Activated T-helper 2 cell treated with anti-CD3 and anti-CD28 coated beads, Interferon-gamma antibody, Interleukin-2, Interleukin-4, amounts not matched to agents 10 μg/mL and 5 μg/mL and 100 μg/mL, durations not matched to agents 14 hours and 24 hours and 36 hours (primary cell): ENCODE measurements at regions of chr1 and their contacts with region 1.

Region 1: GRCh38 chr1:85307987-85308832 is 31.8 kb upstream of the BCL10 start:
- DNase-seq: peak; percentile 24
- H3K4me3 Mint-ChIP-seq: no peak overlapping the region
- H3K27ac Mint-ChIP-seq: no peak overlapping the region
- H3K4me1 Mint-ChIP-seq: peaks cover 3% of the 10 kb centered on the region
- H3K27me3 Mint-ChIP-seq: peaks cover 67% of the 10 kb centered on the region

Region 2: DNA sequence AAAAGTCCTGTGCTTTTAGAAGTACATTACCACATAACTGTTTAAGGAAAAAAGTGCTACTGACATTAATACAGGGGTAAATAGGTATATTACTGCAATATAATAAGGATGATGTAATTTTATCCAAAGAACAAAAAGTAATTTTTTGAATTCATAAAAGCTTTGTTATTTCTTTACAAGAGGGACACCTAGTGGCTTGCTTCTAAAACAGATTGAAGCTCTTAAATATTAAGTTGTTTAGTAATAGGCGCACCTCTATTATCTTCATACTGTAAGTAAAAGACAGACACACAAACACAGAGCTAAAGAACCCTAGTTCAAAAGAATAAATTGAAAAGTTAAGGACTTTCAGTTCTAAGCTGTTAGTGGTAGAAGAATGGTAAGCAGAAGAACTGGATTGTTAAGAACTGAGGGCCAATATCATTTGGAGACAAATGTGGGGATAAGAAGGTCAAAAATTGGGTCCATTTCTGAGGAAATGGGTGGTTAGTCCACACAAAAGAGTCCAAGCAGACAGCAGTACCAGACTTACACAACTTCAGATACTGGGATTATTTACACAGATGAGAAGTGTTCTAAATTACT is 384.6 kb after region 1 on chr1:
- intact Hi-C with region 1: loop called (anchors 2 kb)
- DNase-seq: no peak
- H3K4me3 Mint-ChIP-seq: no peak overlapping the region
- H3K27ac Mint-ChIP-seq: no peak overlapping the region
- H3K4me1 Mint-ChIP-seq: no peaks in the 10 kb centered on the region
- H3K27me3 Mint-ChIP-seq: no peaks in the 10 kb centered on the region